ENCODE measurements at regions of chr10 and their contacts with region 1.

Region 1: DNA sequence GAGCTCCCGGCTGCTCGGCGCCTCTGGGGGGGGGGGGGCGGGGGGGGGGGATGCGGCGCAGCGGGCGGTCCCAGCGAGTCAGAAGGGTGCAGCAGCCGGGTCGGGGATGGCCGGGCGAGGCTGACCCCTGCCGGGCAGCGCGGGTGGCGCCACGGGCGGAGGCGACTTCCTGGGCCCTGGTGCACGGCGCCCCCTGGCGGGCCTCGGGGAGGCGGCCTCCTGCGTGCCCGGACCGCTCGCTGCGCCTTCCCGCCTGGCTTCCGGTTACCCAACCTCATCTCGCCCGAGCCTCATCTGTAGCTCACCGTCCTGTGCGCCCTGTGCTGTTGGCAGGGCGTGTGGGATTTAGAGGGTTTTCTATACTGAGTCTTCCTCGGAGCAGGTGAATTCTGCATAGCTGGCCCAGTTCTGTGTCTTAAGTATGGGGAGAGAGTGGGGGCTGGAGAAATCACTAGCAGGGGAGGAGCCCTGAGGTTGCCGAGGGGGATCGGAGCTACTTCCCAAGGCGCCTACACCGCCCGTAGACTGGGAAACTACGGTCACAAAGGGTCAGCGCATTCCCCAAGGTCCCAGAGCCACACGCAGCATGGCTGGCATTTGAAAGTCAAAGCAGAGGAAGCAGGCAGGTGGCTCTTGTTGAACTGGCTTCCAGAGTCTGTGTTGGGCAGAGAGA is 28.3 kb upstream of the WDFY4 start:
- DNase-seq: peak; percentile 85 to 92
- H3K4me3 ChIP-seq: peak overlapping the region; percentile 40 to 47
- H3K27ac ChIP-seq: no peak overlapping the region
- H3K4me1 ChIP-seq: peaks cover 20% of the 10 kb centered on the region
- H3K27me3 ChIP-seq: no peaks in the 10 kb centered on the region
- CTCF ChIP-seq: peak; percentile 86 to 99 (median 93)
- POLR2A ChIP-seq: no peak

Region 2: DNA sequence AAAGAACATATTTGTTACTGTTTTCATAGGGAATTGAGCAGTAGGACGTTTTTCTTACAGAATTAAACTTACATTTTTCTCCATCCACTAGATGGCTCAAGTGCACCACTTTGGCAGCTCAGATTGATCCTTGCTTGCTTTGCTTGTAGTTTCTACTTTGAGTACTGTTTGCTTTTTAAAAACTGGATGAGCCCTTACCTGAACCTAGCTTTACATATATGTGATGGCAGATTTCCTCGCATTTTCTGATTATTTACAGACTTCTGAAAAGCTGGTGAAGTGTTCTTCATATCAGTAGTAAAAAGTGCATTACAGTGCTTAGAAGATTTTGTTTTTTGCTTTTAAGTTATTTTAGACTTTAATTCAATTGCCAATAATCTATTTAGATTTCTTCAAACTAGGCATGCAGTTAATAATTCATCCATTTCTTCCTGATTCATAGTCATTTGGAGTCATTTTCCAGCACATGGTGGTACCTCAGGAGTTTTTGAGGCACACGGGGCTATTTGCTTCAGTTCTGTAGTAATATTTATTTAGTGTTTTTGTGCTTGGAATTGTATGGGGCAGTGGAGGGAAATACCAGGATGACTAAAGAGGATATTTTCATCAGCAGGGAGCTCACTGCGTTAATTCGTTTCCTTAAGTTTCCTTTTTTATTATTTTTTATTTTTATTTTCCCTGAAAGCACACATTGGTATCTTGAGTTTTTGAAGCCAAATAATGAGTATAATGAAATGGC is 292.6 kb before region 1 on chr10:
- intact Hi-C with region 1: loop called (anchors 5 kb)
- DNase-seq: no peak
- H3K4me3 ChIP-seq: no peak overlapping the region
- H3K27ac ChIP-seq: no peak overlapping the region
- H3K4me1 ChIP-seq: peaks cover 17% of the 10 kb centered on the region
- H3K27me3 ChIP-seq: no peaks in the 10 kb centered on the region
- CTCF ChIP-seq: peak; percentile 43 to 62 (median 46)
- POLR2A ChIP-seq: no peak

Region 3: DNA sequence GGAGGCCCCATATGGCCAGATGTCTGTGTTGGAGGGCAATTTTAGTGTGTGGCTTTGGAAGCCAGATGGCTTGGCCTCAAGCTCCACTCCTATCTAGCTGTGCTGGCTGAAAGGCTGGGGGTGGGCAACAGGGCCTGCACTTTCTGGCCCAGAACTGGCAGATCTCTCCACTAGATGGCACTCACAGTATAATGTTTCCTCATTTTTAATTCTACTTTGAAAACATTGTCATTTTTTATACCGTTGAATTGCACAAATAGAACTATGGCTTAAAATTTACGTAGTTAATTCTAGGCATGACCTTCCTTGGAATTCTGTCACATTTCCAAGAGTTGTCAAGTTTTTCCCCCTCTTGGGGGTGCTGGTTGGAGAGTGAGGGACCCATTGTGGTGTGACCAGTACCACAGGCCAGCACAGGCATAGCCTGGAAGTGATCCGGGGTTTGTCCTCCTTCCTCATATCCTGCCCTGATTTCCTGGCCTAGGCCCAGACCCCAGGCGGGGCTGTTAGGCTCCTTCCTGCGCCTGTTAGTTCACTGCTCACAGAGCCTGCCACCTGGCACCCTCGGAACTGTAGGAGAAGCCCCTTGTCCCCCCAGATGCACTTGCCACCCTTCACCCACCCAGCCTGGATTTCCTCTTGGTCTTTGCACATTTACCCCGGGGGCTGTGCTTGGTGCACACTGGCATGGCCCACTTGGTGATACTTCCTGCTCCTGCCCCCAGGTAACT is 104.4 kb before region 1 on chr10:
- intact Hi-C with region 1: loop called (anchors 5 kb)
- DNase-seq: peak; percentile 70 to 84
- H3K4me3 ChIP-seq: no peak overlapping the region
- H3K27ac ChIP-seq: no peak overlapping the region
- H3K4me1 ChIP-seq: no peaks in the 10 kb centered on the region
- H3K27me3 ChIP-seq: no peaks in the 10 kb centered on the region
- CTCF ChIP-seq: peak; percentile 25 to 62 (median 34)
- POLR2A ChIP-seq: no peak

Region 4: DNA sequence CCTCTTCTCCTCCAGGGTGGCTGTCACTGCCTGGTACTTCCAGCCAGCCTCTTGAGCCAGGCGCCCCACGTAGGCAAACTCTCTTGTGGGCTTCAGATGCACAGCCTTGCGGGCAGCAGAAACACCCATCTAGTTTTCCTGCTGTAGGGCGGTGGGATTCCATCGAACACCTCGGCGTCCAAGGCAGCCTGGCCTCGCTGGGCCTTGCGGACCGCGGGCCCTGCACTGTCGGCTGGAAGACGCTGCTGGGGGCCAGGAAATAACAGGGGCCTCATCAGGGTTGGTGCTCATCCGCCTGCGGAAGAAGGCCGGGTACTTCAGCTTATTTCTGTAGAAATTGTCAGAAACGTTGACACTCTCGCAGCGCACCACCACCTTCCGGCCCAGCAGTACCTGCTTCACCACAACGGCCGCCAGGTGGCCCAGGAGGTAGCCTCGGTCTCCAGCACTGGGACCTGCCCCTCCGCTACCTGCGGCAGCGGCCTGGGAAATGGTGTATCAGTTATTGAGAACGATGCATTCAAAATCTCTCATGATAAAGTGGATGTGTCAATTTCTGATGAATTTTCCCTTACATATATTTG is 89.4 kb after region 1 on chr10:
- intact Hi-C with region 1: no loop called
- DNase-seq: peak; percentile 40 to 65
- H3K4me3 ChIP-seq: no peak overlapping the region
- H3K27ac ChIP-seq: no peak overlapping the region
- H3K4me1 ChIP-seq: no peaks in the 10 kb centered on the region
- H3K27me3 ChIP-seq: no peaks in the 10 kb centered on the region
- CTCF ChIP-seq: no peak
- POLR2A ChIP-seq: no peak

Region 5: GRCh38 chr10:50385624-50386023 is 1729.2 kb after region 1 on chr10:
- intact Hi-C with region 1: no loop called
- DNase-seq: no peak
- H3K4me3 ChIP-seq: no peak overlapping the region
- H3K27ac ChIP-seq: no peak overlapping the region
- H3K4me1 ChIP-seq: peaks cover 50% of the 10 kb centered on the region
- H3K27me3 ChIP-seq: no peaks in the 10 kb centered on the region
- CTCF ChIP-seq: no peak
- POLR2A ChIP-seq: no peak